ENCODE measurements at regions of chr1 and their contacts with region 1.

Region 1: DNA sequence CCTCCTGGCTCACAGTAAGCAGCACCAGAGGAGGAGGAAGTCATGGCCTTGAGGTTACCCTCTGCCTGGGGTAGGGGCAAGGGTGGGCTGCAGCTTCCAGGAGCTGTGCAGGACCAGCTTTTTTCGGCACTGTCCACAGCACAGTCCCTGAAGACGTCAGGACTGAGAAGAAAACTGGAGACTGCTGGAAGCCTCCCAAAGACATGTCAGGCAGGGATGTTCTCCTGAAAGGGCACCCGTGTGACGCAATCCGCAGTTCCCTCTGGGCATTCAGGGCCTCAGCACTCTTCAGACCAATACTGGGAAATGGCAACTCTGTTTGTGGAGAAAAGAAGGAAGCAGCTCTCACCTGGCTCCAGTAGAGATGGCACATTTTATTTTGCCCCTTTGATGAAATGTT is 64.8 kb upstream of the TENT5C start:
- DNase-seq: no peak
- H3K4me3 ChIP-seq: no peak overlapping the region
- H3K27ac ChIP-seq: no peak overlapping the region
- H3K4me1 ChIP-seq: no peaks in the 10 kb centered on the region
- H3K27me3 ChIP-seq: no peaks in the 10 kb centered on the region
- CTCF ChIP-seq: no peak

Region 2: GRCh38 chr1:117493906-117494305 is 47.1 kb before region 1 on chr1:
- CTCF ChIA-PET with region 1: no interaction called
- dilution Hi-C with region 1: loop called (anchors 5 kb)
- in situ Hi-C with region 1: no loop called
- intact Hi-C with region 1: no loop called
- DNase-seq: no peak
- H3K4me3 ChIP-seq: no peak overlapping the region
- H3K27ac ChIP-seq: no peak overlapping the region
- H3K4me1 ChIP-seq: no peaks in the 10 kb centered on the region
- H3K27me3 ChIP-seq: no peaks in the 10 kb centered on the region
- CTCF ChIP-seq: no peak

Region 3: DNA sequence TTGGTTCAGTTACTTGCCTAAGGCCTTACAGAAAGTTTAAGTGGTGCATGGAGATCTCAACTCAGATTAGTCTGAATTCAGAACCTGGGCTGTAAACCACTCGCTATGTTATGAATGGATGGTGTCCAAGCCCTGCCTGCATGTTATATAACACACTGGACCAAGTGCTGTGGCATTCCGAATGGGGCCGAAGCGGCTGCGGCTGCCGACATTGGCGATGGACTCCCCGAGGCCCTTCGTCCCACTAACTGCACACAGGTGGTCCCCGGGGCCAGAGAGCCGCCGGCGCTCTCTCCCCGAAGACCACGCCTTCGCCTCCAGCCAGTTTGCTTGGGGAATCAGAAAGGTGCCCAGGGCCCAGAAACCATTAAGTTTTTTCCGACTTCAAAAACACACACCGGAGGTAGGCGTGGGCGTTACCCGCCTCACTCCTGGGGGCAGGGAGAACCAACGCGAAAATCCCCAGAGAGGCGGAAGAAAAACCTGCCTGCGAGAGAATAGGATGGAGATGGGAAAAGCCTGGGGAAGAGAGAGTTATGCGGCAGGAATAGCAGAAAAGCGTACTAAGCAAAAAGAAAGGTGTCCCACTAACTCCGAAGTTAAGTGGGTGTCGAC is 64.3 kb after region 1 on chr1:
- CTCF ChIA-PET with region 1: no interaction called
- dilution Hi-C with region 1: no loop called
- in situ Hi-C with region 1: no loop called
- intact Hi-C with region 1: no loop called
- DNase-seq: no peak
- H3K4me3 ChIP-seq: peak overlapping the region; percentile 71 to 77 (median 77)
- H3K27ac ChIP-seq: peak overlapping the region; percentile 67
- H3K4me1 ChIP-seq: peaks cover 22% of the 10 kb centered on the region
- H3K27me3 ChIP-seq: peaks cover 4% of the 10 kb centered on the region
- CTCF ChIP-seq: no peak

Measured in mammary epithelial cell (primary cell).